HCT116 (cell line): ENCODE measurements at regions of chr17 and their contacts with region 1.

Region 1: DNA sequence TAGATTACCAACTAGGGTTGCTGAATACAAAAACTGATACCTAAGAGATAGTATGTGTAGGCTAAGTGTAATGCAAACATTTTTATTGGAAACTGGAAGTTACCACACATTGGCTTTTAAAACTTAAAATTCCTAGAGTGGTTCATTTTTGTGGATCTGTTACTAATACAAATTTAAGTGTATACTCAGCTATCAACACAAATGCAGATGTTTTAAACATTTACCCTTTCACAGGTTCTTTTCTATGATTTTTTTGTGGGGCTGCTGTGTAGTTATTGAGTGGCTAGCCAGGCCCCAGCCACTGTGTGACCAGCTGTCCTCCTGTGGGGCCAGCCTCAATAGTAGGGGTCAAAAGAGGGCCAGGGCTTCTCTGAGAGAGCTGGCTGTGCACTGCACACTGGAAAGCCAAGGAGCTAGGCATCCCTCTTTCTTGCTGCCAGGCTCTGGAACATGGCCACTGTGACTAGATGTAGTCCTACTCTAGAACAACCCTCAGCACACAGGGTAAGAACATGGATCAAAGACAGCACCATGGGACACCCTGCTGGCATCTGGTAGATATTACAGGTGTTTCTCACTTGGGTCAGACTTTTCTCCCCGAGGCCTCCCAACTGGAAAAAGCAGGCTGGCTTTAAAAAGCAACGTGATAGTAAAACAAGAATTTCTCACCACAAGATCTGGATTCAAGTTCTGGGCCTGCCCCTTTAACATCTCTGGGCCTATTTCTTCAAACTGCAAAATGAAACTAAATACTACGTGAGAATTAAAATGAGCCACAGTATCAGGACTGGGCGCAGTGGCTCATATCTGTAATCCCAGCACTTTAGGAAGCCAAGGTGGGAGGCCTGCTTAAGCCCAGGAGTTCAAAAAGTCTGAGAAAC is 7.3 kb upstream of the VEZF1 start:
- DNase-seq: peak; percentile 80
- ATAC-seq: peak; percentile 81
- H3K4me3 ChIP-seq: no peak overlapping the region
- H3K27ac ChIP-seq: peak overlapping the region; percentile 17; the same call in 1 of the 2 replicates
- H3K4me1 ChIP-seq: peaks cover 39 to 83% of the 10 kb centered on the region in 2 experiments
- H3K27me3 ChIP-seq: no peaks in the 10 kb centered on the region
- CTCF ChIP-seq: peak; percentile 74 to 94 (median 87)
- POLR2A ChIP-seq: no peak
- RAD21 ChIP-seq: peak; percentile 95

Region 2: DNA sequence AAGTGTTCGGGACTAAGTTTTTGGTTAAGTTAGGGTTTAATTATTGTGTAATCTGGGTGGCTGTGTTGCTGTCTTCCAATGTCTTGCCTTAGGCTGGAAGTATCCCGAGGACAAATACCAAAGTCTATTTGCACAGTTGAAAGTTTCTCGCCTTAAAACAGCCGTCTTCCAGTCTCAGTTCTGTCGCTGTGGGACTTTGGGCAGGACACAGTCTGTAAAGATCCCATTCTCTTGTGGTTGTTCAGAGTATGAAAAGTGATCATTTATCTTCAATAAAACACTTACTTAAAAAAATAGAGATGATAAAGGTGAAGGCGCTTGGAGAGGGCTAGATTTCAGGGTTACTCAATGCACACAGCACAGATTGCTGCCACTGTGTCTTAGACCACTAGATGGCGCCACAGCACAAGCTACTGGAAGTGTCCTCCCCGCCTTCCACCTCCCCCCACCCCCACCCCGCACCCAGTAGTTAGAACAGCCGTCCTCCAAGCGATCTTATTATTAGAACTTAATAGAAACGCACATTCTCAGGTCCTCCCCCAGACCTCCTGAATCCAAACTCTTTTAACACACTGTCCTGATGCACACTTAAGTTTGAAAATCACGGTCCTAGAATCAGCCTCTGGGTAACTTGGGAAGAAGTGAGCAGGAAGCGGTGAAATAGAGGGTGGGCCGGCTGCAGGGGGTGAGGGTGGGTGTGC is 864.4 kb before region 1 on chr17:
- CTCF ChIA-PET with region 1: interaction called, 3 read pairs
- POLR2A ChIA-PET with region 1: no interaction called
- RAD21 ChIA-PET with region 1: no interaction called
- intact Hi-C with region 1: loop called (anchors 5 kb)
- DNase-seq: peak; percentile 70
- ATAC-seq: peak; percentile 97
- H3K4me3 ChIP-seq: no peak overlapping the region; a peak in 1 of 4 replicates
- H3K27ac ChIP-seq: no peak overlapping the region
- H3K4me1 ChIP-seq: peaks cover 0 to 3% of the 10 kb centered on the region in 2 experiments; a peak in 1 of 4 replicates
- H3K27me3 ChIP-seq: no peaks in the 10 kb centered on the region
- CTCF ChIP-seq: peak; percentile 65 to 86 (median 82)
- POLR2A ChIP-seq: no peak
- RAD21 ChIP-seq: peak; percentile 87

Region 3: DNA sequence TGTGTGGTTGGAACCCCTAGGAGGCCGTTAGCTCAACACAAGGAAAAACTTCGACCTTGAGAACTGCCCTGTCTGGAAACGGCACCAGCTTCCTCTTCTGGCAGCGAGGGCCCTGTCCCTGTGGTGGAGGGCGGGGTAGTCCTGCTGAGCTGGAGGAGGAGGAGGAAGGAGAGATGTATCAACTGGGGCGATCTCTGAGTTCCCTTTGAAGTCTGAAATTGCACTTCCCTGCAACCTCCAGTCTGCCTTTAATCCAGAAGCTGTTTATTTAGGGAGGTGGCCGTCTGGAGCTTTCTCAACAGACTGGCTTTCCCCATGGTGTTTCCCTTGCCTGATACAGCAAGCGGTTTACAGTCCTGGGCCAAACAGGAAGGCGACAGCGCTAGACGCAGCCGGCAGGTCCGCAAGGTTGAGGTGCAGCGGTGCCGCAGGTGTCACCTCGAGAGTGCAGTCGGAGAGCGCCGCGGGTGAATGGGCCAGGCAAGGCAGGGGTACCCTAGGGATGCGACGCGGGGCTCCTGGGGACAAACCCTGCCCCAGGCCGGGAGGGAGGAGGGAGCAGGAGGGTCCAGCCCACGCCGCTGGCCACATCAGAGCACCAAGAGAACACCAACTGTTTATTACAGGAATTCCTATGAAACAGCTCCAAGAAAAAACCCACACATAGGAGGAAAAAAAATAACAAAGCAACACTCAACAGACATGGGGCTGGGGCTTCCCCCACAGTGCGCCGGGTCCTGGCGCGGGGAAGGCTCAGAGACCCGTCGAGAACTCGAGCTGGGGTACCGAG is 134.1 kb before region 1 on chr17:
- CTCF ChIA-PET with region 1: interaction called, 288 read pairs
- POLR2A ChIA-PET with region 1: interaction called, 53 read pairs
- RAD21 ChIA-PET with region 1: interaction called, 6 to 7 read pairs
- intact Hi-C with region 1: loop called (anchors 1 kb)
- DNase-seq: peak; percentile 75
- ATAC-seq: peak; percentile 68
- H3K4me3 ChIP-seq: peak overlapping the region; percentile 38 to 51
- H3K27ac ChIP-seq: peak overlapping the region; percentile 79
- H3K4me1 ChIP-seq: peaks cover 54 to 80% of the 10 kb centered on the region in 2 experiments
- H3K27me3 ChIP-seq: no peaks in the 10 kb centered on the region
- CTCF ChIP-seq: 0 out of 6 replicates have a peak, but pooled peaks of 1 of the 3 experiments have one; percentile 5
- POLR2A ChIP-seq: no peak
- RAD21 ChIP-seq: no peak

Region 4: GRCh38 chr17:57875309-57876115 is 119.8 kb before region 1 on chr17:
- CTCF ChIA-PET with region 1: interaction called, 26 read pairs
- POLR2A ChIA-PET with region 1: interaction called, 3 read pairs
- RAD21 ChIA-PET with region 1: interaction called in 1 of 2 experiments, 4 read pairs
- intact Hi-C with region 1: no loop called
- DNase-seq: peak; percentile 90
- ATAC-seq: peak; percentile 81
- H3K4me3 ChIP-seq: peak overlapping the region; percentile 17 to 45
- H3K27ac ChIP-seq: peak overlapping the region; percentile 68
- H3K4me1 ChIP-seq: peaks cover 71 to 98% of the 10 kb centered on the region in 2 experiments
- H3K27me3 ChIP-seq: no peaks in the 10 kb centered on the region
- CTCF ChIP-seq: peak in 2 of 3 experiments; percentile 55 to 60; a peak in 4 of 6 replicates
- POLR2A ChIP-seq: no peak
- RAD21 ChIP-seq: no peak

Region 5: DNA sequence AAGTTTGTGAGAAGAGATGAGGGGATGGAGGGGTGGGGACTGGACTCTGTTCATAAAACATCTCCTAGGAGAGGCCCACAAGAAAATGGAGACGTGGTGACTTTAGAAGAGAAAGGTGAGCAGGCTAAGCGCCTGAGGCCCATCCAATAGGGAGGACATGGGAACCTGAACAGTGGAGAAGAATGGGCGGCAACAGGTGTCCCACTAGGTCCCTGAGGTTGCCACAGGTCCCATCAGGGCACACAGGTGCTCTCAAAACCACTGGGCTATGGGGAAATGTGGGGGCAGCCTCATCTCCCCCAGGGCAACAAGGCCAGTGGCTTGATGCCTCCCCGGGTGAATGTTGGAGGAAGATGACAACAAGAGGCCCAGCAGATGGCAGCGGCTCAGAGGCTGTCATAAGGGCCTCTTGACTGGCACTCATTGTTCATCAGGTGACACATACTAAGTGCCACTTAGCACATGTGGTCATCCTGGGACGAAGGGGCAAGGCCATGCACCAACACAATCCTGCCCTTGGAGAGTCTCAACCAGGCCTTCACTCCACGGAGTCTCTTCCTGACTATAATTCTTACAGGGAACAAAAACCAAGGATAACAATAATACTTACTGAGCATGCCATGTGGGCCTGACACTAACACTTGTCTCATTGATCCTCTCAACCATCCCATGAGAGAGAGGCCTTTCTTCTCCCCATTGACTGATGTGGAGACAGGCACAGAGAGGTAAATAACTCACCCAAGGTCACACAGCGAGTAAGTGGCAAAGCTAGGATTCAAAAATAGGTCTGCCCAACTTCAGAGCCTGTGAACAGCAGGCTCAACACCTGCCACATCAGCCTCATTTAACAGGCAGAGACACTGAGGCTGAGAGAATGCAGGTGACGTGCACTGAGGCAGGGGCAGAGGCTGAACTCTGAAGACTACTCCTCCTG is 78.1 kb before region 1 on chr17:
- CTCF ChIA-PET with region 1: interaction called, 3 read pairs
- POLR2A ChIA-PET with region 1: no interaction called
- RAD21 ChIA-PET with region 1: no interaction called
- intact Hi-C with region 1: loop called (anchors 2 kb)
- DNase-seq: peak; percentile 48
- ATAC-seq: peak; percentile 67
- H3K4me3 ChIP-seq: no peak overlapping the region
- H3K27ac ChIP-seq: peak overlapping the region; percentile 43; the same call in 1 of the 2 replicates
- H3K4me1 ChIP-seq: peaks cover 62 to 83% of the 10 kb centered on the region in 2 experiments
- H3K27me3 ChIP-seq: no peaks in the 10 kb centered on the region
- CTCF ChIP-seq: peak; percentile 24 to 52 (median 47); a peak in 4 of 6 replicates
- POLR2A ChIP-seq: no peak
- RAD21 ChIP-seq: peak; percentile 81

Region 6: GRCh38 chr17:57955183-57955931 is 40.0 kb before region 1 on chr17 and contains the start of gene CUEDC1:
- CTCF ChIA-PET with region 1: interaction called, 12 read pairs
- POLR2A ChIA-PET with region 1: interaction called, 6 read pairs
- RAD21 ChIA-PET with region 1: no interaction called
- intact Hi-C with region 1: no loop called
- DNase-seq: no peak
- ATAC-seq: peak; percentile 67
- H3K4me3 ChIP-seq: peak within 1 kb of the TSS; percentile 75
- H3K27ac ChIP-seq: peak within 1 kb of the TSS; percentile 97
- H3K4me1 ChIP-seq: peaks cover 57 to 66% of the 10 kb centered on the region in 2 experiments
- H3K27me3 ChIP-seq: no peaks in the 10 kb centered on the region
- CTCF ChIP-seq: no peak
- POLR2A ChIP-seq: peak; percentile 48
- RAD21 ChIP-seq: no peak
- total RNA-seq, gene CUEDC1: 60.2 TPM

Region 7: DNA sequence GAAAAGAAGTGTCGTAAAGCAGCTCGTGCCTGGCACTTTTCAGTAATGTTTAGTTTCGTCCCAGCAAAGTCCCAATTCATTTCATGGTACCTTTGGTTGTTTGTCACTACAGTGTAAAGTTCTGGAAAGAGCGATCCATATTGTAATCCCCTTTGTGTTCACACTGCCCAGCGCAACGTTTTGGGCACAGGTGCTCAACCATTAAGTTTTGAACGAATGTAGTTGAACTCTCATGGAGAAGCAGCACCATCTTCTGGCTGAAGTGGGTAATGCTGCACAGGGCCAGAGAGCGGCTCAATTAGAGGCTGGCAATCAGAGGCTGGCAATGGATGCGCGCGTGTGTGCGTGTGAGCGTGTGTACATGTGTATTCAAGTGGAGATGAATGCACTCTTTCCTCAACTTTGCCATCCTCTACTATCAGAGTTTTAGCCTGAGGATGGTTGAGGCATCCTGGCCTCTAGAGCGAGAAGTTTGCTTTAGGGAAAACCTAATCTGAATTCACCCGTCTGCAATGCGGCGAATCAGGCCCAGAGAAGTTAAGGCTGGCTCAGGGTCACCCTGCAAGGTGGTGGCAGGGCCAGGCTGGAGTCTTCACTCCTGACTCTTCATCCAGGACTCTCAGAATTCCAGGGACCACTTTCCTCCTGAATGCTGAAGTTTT is 117.8 kb after region 1 on chr17:
- CTCF ChIA-PET with region 1: interaction called, 3 read pairs
- POLR2A ChIA-PET with region 1: no interaction called
- RAD21 ChIA-PET with region 1: no interaction called
- intact Hi-C with region 1: loop called (anchors 2 kb)
- DNase-seq: peak; percentile 79
- ATAC-seq: peak; percentile 93
- H3K4me3 ChIP-seq: no peak overlapping the region
- H3K27ac ChIP-seq: no peak overlapping the region
- H3K4me1 ChIP-seq: peaks cover 0 to 3% of the 10 kb centered on the region in 2 experiments; a peak in 1 of 4 replicates
- H3K27me3 ChIP-seq: peaks cover 12% of the 10 kb centered on the region; the same call in 1 of the 2 replicates
- CTCF ChIP-seq: peak; percentile 95 to 100 (median 99)
- POLR2A ChIP-seq: no peak
- RAD21 ChIP-seq: peak; percentile 100

Region 8: GRCh38 chr17:58764373-58764772 is 769.1 kb after region 1 on chr17:
- CTCF ChIA-PET with region 1: no interaction called
- POLR2A ChIA-PET with region 1: no interaction called
- RAD21 ChIA-PET with region 1: no interaction called
- intact Hi-C with region 1: no loop called
- DNase-seq: no peak
- ATAC-seq: no peak
- H3K4me3 ChIP-seq: no peak overlapping the region
- H3K27ac ChIP-seq: no peak overlapping the region
- H3K4me1 ChIP-seq: no peaks in the 10 kb centered on the region
- H3K27me3 ChIP-seq: no peaks in the 10 kb centered on the region
- CTCF ChIP-seq: no peak
- POLR2A ChIP-seq: no peak
- RAD21 ChIP-seq: no peak